GM12878 (cell line): ENCODE measurements at regions of chr5 and their contacts with region 1.

Region 1: GRCh38 chr5:158819840-158820620 is 279.7 kb downstream of the EBF1 start:
- DNase-seq: peak; percentile 77
- ATAC-seq: peak; percentile 90
- H3K4me3 ChIP-seq: peak overlapping the region; percentile 53
- H3K27ac ChIP-seq: peak overlapping the region; percentile 83
- H3K4me1 ChIP-seq: peaks cover 50% of the 10 kb centered on the region
- H3K27me3 ChIP-seq: no peaks in the 10 kb centered on the region
- CTCF ChIP-seq: no peak
- EP300 ChIP-seq: peak in 1 of 2 experiments; percentile 5; a peak in 1 of 4 replicates
- POLR2A ChIP-seq: no peak
- RAD21 ChIP-seq: peak; percentile 10; the same call in 1 of the 2 replicates

Region 2: DNA sequence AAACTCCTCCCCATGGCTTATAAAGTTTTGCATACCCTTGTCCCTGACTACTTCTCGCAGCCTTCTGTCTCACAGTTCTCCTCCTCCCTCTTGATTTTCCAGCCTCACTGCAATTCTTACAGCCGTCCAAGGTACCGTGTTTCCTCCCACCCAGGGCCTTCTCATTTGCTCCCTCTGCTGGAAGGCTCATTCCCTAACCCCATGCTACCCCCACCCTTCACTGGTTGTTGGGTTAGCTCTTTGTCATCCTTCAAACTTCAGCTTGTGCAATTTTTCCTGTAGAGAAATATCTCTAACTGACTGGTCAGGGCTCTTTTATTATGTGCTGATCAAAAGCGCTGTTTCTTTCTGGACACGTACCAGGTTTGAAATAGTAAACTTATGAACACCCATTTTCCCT is 49.5 kb before region 1 on chr5:
- CTCF ChIA-PET with region 1: interaction called, 6 read pairs
- POLR2A ChIA-PET with region 1: interaction called, 31 read pairs
- RAD21 ChIA-PET with region 1: interaction called, 19 read pairs
- SMC1A ChIA-PET with region 1: interaction called, 18 read pairs
- in situ Hi-C with region 1: no loop called
- intact Hi-C with region 1: no loop called
- DNase-seq: no peak
- ATAC-seq: no peak
- H3K4me3 ChIP-seq: no peak overlapping the region
- H3K27ac ChIP-seq: no peak overlapping the region
- H3K4me1 ChIP-seq: peaks cover 4% of the 10 kb centered on the region; the same call in 1 of the 2 replicates
- H3K27me3 ChIP-seq: no peaks in the 10 kb centered on the region
- CTCF ChIP-seq: peak in 2 of 3 experiments; percentile 17 to 38; a peak in 2 of 6 replicates
- EP300 ChIP-seq: no peak
- POLR2A ChIP-seq: no peak
- RAD21 ChIP-seq: 0 out of 2 replicates have a peak, but pooled peaks have one; percentile 15

Region 3: GRCh38 chr5:158786390-158786789 is 33.6 kb before region 1 on chr5:
- CTCF ChIA-PET with region 1: interaction called, 7 read pairs
- POLR2A ChIA-PET with region 1: no interaction called
- RAD21 ChIA-PET with region 1: interaction called, 3 read pairs
- SMC1A ChIA-PET with region 1: interaction called, 15 read pairs
- in situ Hi-C with region 1: no loop called
- intact Hi-C with region 1: no loop called
- DNase-seq: no peak
- ATAC-seq: no peak
- H3K4me3 ChIP-seq: no peak overlapping the region
- H3K27ac ChIP-seq: no peak overlapping the region
- H3K4me1 ChIP-seq: peaks cover 1% of the 10 kb centered on the region; the same call in 1 of the 2 replicates
- H3K27me3 ChIP-seq: no peaks in the 10 kb centered on the region
- CTCF ChIP-seq: no peak
- EP300 ChIP-seq: no peak
- POLR2A ChIP-seq: no peak
- RAD21 ChIP-seq: no peak

Region 4: GRCh38 chr5:158848634-158849033 is 28.6 kb after region 1 on chr5:
- CTCF ChIA-PET with region 1: interaction called, 7 read pairs
- POLR2A ChIA-PET with region 1: interaction called, 8 read pairs
- RAD21 ChIA-PET with region 1: interaction called, 9 read pairs
- SMC1A ChIA-PET with region 1: interaction called, 33 read pairs
- in situ Hi-C with region 1: no loop called
- intact Hi-C with region 1: loop called (anchors 2 kb)
- DNase-seq: peak; percentile 80
- ATAC-seq: peak; percentile 79
- H3K4me3 ChIP-seq: no peak overlapping the region
- H3K27ac ChIP-seq: peak overlapping the region; percentile 68
- H3K4me1 ChIP-seq: peaks cover 31% of the 10 kb centered on the region
- H3K27me3 ChIP-seq: no peaks in the 10 kb centered on the region
- CTCF ChIP-seq: no peak
- EP300 ChIP-seq: peak; percentile 16 to 30; a peak in 1 of 4 replicates
- POLR2A ChIP-seq: no peak
- RAD21 ChIP-seq: no peak

Region 5: GRCh38 chr5:158898185-158899177 is 78.5 kb after region 1 on chr5:
- CTCF ChIA-PET with region 1: no interaction called
- POLR2A ChIA-PET with region 1: interaction called, 5 read pairs
- RAD21 ChIA-PET with region 1: no interaction called
- SMC1A ChIA-PET with region 1: interaction called, 3 read pairs
- in situ Hi-C with region 1: no loop called
- intact Hi-C with region 1: loop called (anchors 5 kb)
- DNase-seq: no peak
- ATAC-seq: peak; percentile 82
- H3K4me3 ChIP-seq: 0 out of 2 replicates have a peak overlapping the region, but pooled peaks have one; percentile 15
- H3K27ac ChIP-seq: peak overlapping the region; percentile 83
- H3K4me1 ChIP-seq: peaks cover 14% of the 10 kb centered on the region
- H3K27me3 ChIP-seq: no peaks in the 10 kb centered on the region
- CTCF ChIP-seq: no peak
- EP300 ChIP-seq: peak; percentile 70 to 74; a peak in 3 of 4 replicates
- POLR2A ChIP-seq: no peak
- RAD21 ChIP-seq: no peak

Region 6: DNA sequence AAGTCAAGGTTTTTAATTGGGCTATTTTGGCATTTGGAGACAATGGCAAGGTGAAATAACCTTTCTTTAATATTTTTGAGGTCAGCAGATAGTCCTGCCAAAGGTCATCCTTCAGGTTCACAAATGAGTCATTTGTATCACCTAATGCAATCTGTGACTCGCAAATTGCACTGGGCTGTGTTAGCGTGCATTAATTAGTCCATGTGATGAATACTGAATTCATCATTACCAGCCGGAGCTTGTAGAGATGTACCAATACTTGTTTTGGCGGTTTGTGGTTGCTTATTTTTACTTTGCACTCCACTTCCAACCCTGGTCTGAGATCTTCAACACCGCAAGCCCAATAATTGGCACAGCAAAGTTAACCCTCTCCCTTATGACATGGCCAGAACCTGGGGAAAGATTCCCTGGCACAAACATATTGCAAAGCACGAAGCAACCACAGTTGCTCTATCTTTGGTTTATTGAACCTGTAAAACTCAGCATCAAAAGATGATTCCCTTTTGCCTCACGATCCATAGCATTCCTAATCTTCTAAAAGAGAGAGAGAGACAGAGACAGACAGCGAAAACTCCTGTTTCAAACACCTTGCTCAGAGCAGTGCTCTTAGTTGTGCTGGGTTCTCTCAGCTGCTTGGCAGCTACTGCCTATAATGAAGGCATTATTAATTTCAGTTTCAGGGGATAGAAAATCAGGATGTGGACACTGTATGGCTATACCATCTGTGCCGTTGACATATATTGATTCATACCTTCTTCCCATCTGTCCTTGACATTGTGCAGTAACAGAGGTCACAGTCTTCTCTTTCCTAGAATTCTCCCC is 101.6 kb after region 1 on chr5:
- CTCF ChIA-PET with region 1: interaction called, 4 read pairs
- POLR2A ChIA-PET with region 1: no interaction called
- RAD21 ChIA-PET with region 1: interaction called, 13 read pairs
- SMC1A ChIA-PET with region 1: interaction called, 10 read pairs
- in situ Hi-C with region 1: no loop called
- intact Hi-C with region 1: no loop called
- DNase-seq: peak; percentile 75
- ATAC-seq: peak; percentile 70
- H3K4me3 ChIP-seq: no peak overlapping the region
- H3K27ac ChIP-seq: peak overlapping the region; percentile 45
- H3K4me1 ChIP-seq: peaks cover 3% of the 10 kb centered on the region
- H3K27me3 ChIP-seq: no peaks in the 10 kb centered on the region
- CTCF ChIP-seq: no peak
- EP300 ChIP-seq: peak; percentile 91 to 98
- POLR2A ChIP-seq: no peak
- RAD21 ChIP-seq: no peak

Region 7: GRCh38 chr5:158938200-158938599 is 118.2 kb after region 1 on chr5:
- CTCF ChIA-PET with region 1: no interaction called
- POLR2A ChIA-PET with region 1: no interaction called
- RAD21 ChIA-PET with region 1: no interaction called
- SMC1A ChIA-PET with region 1: no interaction called
- in situ Hi-C with region 1: no loop called
- intact Hi-C with region 1: no loop called
- DNase-seq: no peak
- ATAC-seq: no peak
- H3K4me3 ChIP-seq: no peak overlapping the region
- H3K27ac ChIP-seq: no peak overlapping the region
- H3K4me1 ChIP-seq: peaks cover 9% of the 10 kb centered on the region; the same call in 1 of the 2 replicates
- H3K27me3 ChIP-seq: no peaks in the 10 kb centered on the region
- CTCF ChIP-seq: no peak
- EP300 ChIP-seq: no peak
- POLR2A ChIP-seq: no peak
- RAD21 ChIP-seq: no peak